ENCODE measurements at regions of chr1 and their contacts with region 1.

Region 1: DNA sequence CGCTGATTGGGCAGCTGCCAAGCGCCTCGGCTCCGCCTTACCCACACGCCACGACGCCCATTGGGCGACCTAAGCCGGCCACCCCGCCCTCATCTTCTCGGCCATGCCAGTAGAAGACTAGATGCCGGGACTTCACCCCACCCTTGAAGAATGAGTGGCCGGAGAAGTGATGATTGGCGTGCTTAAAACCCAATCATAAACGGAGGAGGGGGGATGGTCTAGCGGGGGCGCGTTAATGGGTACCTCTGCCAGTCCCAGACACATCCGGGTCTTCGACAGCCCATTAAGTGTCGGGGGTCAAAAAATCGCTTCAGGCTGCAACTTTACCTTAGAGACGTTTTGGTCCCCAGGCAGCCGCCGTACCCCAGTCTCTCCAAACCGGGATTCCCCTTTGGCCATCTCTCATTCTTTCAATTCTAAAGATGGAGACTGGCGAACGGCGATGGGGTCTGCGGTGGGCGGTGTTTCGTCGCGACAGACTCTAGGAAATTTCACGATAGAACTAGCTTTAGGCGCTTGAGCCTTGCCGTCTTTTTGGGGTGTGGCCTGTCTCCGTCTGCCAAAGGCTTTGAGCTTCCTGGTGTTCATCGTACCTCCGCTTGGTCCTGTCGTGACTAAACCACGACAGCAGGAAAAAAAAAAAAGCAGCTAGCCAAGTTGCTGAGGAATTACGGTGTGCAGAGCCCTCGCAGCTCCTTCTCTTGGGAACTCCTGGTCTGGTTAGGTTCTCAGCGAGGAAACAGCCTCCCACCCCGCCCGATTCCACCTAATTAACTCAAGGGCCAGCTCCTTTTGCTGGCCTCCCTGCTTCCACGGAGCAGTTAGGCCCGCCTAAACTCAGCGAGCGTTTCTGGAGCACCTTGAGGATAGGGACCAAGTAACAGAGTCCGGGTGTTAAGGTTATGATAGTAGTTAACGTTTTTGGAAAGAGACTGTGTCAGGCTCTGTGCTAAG is at the start of gene GATAD2B:
- DNase-seq: peak; percentile 100
- H3K4me3 ChIP-seq: peak within 1 kb of the TSS; percentile 82 to 99 (median 95)
- H3K27ac ChIP-seq: peak within 1 kb of the TSS; percentile 94 to 96
- H3K4me1 ChIP-seq: peaks cover 32 to 46% (median 43%) of the 10 kb centered on the region in 4 experiments
- H3K27me3 ChIP-seq: no peaks in the 10 kb centered on the region

Region 2: DNA sequence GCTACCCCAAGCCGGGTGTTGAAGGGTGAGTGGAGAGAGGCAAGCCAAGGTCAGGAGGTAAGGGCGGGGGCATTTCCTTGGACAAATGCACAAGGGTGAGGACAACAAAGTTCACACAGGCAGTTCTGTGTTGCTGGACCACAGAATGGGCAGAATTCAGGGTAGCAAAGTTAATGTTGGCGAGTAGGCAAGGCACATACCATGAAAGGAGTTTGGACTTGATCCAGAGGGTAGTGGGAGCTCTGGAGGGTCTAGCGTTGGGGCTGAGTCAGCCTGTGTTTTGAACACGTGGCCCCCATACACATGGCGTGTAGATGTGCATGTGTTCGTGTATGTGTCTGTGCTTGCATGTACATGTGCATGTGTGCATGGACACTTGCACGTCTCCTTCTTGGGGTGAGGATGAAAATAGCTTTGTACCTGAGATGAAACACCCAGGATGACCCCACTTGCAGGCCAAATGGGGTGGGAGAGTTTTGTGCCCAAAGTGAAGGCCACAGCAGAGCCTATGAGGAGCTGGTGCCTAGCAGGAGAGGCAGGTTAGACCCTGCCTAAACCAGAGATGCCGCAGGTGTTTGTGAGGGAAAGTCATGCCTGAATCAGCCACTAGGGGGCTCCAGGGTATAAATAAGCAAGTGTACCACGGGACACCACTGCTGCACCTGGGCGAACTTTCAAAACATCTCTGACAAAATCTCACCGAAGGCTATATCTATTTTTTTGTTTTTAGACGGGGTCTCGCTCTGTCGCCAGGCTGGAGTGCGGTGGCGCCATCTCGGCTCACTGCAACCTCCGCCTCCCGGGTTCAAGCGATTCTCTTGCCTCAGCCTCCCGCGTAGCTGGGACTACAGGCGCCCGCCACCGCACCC is 126.2 kb before region 1 on chr1:
- CTCF ChIA-PET with region 1: interaction called, 19 read pairs
- POLR2A ChIA-PET with region 1: no interaction called
- DNase-seq: peak; percentile 70 to 87 (median 82)
- H3K4me3 ChIP-seq: no peak overlapping the region
- H3K27ac ChIP-seq: no peak overlapping the region
- H3K4me1 ChIP-seq: peaks cover 0 to 26% (median 1%) of the 10 kb centered on the region in 4 experiments
- H3K27me3 ChIP-seq: no peaks in the 10 kb centered on the region

Region 3: DNA sequence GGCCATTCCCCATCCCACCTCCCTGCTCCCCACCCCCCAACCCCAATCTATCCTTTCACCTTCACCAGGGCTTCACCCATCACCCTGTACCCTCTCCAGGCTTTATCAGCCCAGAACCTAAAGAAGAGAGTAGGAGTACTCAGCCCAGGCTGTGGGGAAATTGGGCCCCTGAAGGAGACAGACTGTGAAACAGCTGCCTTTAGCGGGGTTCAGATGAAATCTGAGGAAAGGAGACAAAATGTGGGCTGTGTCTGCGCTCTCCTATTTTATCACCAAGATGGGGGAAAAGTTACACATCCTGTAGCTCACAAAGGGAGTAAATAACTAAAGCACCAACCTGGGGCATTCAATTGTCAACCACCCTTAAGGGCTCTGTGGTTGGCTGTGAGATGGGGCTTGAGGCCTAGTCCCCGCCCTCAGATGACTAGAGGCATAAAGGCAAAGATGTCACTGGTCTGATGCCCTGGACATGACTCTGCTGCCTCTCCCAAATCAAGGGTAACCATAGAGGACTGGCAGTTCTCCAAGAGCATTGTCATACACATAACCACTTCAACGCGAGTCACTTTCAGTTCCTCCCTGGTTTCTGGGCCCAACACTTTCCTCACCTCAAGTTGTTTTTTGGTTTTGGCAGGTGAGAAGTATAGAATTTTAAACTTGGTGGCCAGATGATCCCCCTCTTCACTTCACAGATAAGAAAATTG is 118.1 kb before region 1 on chr1:
- CTCF ChIA-PET with region 1: interaction called, 19 read pairs
- POLR2A ChIA-PET with region 1: no interaction called
- DNase-seq: peak; percentile 87 to 98 (median 97)
- H3K4me3 ChIP-seq: no peak overlapping the region
- H3K27ac ChIP-seq: peak overlapping the region; percentile 61 to 80
- H3K4me1 ChIP-seq: peaks cover 2 to 25% (median 22%) of the 10 kb centered on the region in 4 experiments
- H3K27me3 ChIP-seq: no peaks in the 10 kb centered on the region

Region 4: GRCh38 chr1:153827168-153827964 is 95.9 kb before region 1 on chr1:
- CTCF ChIA-PET with region 1: interaction called, 37 read pairs
- POLR2A ChIA-PET with region 1: interaction called, 6 read pairs
- DNase-seq: peak in 2 of 3 donors; percentile 14 to 24
- H3K4me3 ChIP-seq: no peak overlapping the region
- H3K27ac ChIP-seq: no peak overlapping the region
- H3K4me1 ChIP-seq: peaks cover 0 to 1% (median 0%) of the 10 kb centered on the region in 4 experiments
- H3K27me3 ChIP-seq: no peaks in the 10 kb centered on the region

Region 5: DNA sequence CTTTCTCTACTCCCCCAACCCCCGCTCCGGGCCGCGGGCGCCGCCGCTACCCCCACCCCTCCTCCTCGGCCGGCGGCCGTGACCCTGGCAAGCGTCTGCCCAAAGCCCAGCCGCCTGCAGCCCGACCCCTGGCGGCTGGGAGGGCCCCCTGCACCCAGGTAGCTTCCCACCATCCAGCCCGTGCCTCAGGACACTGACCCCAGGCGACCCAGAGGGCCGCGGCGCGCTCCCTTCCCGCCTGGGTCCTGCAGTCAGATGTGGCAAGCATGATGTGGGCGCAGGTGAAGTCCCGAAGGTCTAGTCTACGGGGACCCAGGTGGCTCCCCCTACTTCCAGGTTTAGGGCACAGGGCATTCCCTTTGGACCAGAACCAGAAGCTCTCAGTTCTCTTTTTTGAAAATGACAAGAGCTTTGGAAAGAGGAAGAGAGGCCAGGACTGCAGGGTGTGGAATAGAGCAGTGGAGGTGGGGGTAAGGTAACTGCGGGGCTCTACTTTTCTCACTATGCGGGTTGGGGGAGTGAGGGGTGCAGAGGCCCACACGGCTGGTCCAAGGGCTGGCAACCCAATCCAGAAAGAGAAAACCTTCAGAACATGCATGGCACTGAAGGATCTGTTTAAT is 23.5 kb after region 1 on chr1 and contains the start of gene DENND4B:
- CTCF ChIA-PET with region 1: interaction called, 31 read pairs
- POLR2A ChIA-PET with region 1: interaction called, 26 read pairs
- DNase-seq: peak; percentile 77 to 88 (median 87)
- H3K4me3 ChIP-seq: peak within 1 kb of the TSS; percentile 71 to 92 (median 83)
- H3K27ac ChIP-seq: peak within 1 kb of the TSS; percentile 83 to 91
- H3K4me1 ChIP-seq: peaks cover 4 to 33% (median 30%) of the 10 kb centered on the region in 4 experiments
- H3K27me3 ChIP-seq: no peaks in the 10 kb centered on the region